AG04449 (cell line): ENCODE measurements at regions of chr1 and their contacts with region 1.

Region 1: GRCh38 chr1:36342481-36343478 is 19.3 kb upstream of the EVA1B start:
- DNase-seq: no peak
- H3K4me3 ChIP-seq: no peak overlapping the region
- CTCF ChIP-seq: peak; percentile 84

Region 2: GRCh38 chr1:35834218-35834617 is 508.6 kb before region 1 on chr1:
- CTCF ChIA-PET with region 1: no interaction called
- POLR2A ChIA-PET with region 1: no interaction called
- DNase-seq: no peak
- H3K4me3 ChIP-seq: no peak overlapping the region
- CTCF ChIP-seq: no peak

Region 3: GRCh38 chr1:36330940-36331339 is 11.8 kb before region 1 on chr1:
- CTCF ChIA-PET with region 1: interaction called, 25 read pairs
- POLR2A ChIA-PET with region 1: interaction called, 3 read pairs
- DNase-seq: no peak
- H3K4me3 ChIP-seq: no peak overlapping the region
- CTCF ChIP-seq: no peak

Region 4: DNA sequence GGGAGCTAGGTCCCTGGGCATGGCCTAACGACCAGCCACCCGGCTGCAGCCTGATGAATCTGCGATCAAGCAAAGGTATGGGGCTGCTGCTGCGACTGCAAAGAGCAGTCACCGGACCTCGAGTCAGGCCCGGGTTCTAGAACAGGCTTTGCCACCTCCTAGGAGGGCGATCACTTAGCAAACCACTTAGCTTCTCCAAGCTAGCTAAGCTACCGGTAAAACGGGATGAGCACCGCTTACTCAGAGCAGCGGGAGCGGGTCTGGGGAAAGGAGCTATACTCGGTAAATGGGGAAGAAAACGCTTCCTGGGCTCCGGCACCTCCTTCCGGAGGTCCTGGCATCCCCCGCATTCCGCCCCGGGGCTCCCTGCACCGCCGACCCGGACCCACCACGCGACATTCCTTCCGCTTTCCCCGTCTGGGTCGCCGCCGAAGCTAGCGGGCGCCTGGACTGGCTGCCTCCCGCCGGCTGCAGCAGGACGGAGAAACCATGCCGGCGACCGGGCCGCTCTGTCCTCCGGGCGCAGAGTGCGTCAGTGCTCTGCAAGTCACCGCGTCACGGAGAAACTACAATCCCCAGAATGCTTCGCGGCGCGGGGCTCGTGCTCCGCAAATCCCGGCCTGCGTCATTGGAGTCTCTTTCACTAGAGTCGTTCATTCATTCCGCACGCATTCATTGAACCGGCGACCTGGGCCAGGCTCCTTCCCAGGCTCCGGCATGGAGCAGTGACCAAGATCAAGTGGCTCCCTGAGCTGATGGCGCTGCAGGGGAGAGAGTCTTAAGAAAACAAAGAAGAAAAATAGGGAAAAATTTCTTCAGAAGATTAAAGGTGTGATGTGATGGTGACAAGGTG is 54.8 kb after region 1 on chr1 and contains the start of gene LSM10:
- CTCF ChIA-PET with region 1: interaction called, 18 read pairs
- POLR2A ChIA-PET with region 1: no interaction called
- DNase-seq: peak; percentile 44
- H3K4me3 ChIP-seq: peak within 1 kb of the TSS; percentile 85
- CTCF ChIP-seq: no peak

Region 5: GRCh38 chr1:36411674-36412520 is 69.1 kb after region 1 on chr1:
- CTCF ChIA-PET with region 1: interaction called, 54 read pairs
- POLR2A ChIA-PET with region 1: no interaction called
- DNase-seq: no peak
- H3K4me3 ChIP-seq: no peak overlapping the region
- CTCF ChIP-seq: no peak

Region 6: GRCh38 chr1:36420836-36421664 is 78.3 kb after region 1 on chr1:
- CTCF ChIA-PET with region 1: interaction called, 75 read pairs
- POLR2A ChIA-PET with region 1: interaction called, 4 read pairs
- DNase-seq: peak; percentile 26
- H3K4me3 ChIP-seq: no peak overlapping the region
- CTCF ChIP-seq: peak; percentile 99

Region 7: GRCh38 chr1:36585569-36586548 is 243.1 kb after region 1 on chr1:
- CTCF ChIA-PET with region 1: no interaction called
- POLR2A ChIA-PET with region 1: no interaction called
- DNase-seq: no peak
- H3K4me3 ChIP-seq: no peak overlapping the region
- CTCF ChIP-seq: no peak